Activated B cell treated with CpG ODN at 0.5 μM for 24 hours (primary cell): ENCODE measurements at regions of chr6 and their contacts with region 1.

Region 1: DNA sequence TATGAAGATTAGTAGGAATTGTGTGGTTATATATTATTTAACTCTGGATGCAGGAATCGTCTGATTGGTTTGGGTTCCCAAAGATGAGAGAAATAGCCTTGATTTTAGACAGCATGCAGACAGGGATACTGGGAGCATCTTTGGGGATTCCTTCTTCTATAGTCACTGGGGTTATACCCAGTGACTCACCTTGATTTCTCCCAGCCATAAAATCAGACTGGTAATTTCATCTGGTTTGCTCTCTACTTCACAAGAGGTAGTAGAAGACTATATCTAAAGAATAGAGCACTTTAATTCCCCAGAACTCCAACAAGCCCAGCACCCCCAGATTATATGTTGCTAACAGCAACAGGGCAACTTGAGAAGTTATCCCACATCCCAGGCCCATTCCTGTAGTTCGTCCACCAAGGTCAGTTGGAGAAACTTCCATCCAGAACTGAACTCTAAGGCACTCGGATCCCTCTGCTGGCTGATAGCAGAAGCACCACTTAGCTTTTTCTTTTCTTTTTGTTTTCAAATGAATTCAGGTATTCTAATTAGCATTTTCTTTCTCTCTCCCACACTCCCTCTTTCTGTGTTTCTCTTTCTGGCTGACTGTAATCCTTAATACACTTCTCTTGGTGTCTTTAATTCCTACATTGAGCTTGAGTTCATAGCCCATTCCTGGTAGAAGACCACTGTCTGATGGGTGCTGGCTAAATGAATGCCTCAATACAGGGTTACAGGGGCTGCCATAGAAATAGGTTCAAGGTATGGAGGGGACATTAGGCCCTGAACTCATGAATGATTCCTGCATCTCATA is 20.4 kb upstream of the EFHC1 start:
- DNase-seq: no peak
- ATAC-seq: peak; percentile 61
- H3K4me3 Mint-ChIP-seq: no peak overlapping the region
- H3K27ac Mint-ChIP-seq: no peak overlapping the region
- H3K4me1 Mint-ChIP-seq: peaks cover 33% of the 10 kb centered on the region
- H3K27me3 Mint-ChIP-seq: no peaks in the 10 kb centered on the region
- CTCF ChIP-seq: no peak

Region 2: DNA sequence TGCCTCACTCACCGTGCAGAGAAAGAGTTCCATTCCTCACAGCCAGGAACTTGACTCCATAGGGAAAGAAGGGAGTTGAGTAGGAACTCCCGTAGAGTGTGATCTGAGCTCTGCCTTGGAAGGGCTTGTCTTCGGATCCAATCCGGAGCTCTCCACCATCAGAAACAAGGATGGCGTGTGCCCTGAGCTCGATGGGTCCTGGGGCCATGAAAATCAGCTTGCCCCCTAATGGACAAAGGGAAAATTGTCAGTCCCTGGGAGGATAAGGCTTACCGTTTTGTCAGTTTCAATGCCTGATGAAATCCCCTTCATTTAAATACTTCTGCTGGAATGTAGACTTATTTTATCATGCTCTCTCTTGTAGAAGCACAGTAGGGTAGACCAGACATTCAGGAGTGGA is 465.6 kb before region 1 on chr6:
- CTCF ChIA-PET with region 1: no interaction called
- POLR2A ChIA-PET with region 1: no interaction called
- intact Hi-C with region 1: no loop called
- DNase-seq: no peak
- ATAC-seq: no peak
- H3K4me3 Mint-ChIP-seq: no peak overlapping the region
- H3K27ac Mint-ChIP-seq: no peak overlapping the region
- H3K4me1 Mint-ChIP-seq: no peaks in the 10 kb centered on the region
- H3K27me3 Mint-ChIP-seq: no peaks in the 10 kb centered on the region
- CTCF ChIP-seq: no peak

Region 3: DNA sequence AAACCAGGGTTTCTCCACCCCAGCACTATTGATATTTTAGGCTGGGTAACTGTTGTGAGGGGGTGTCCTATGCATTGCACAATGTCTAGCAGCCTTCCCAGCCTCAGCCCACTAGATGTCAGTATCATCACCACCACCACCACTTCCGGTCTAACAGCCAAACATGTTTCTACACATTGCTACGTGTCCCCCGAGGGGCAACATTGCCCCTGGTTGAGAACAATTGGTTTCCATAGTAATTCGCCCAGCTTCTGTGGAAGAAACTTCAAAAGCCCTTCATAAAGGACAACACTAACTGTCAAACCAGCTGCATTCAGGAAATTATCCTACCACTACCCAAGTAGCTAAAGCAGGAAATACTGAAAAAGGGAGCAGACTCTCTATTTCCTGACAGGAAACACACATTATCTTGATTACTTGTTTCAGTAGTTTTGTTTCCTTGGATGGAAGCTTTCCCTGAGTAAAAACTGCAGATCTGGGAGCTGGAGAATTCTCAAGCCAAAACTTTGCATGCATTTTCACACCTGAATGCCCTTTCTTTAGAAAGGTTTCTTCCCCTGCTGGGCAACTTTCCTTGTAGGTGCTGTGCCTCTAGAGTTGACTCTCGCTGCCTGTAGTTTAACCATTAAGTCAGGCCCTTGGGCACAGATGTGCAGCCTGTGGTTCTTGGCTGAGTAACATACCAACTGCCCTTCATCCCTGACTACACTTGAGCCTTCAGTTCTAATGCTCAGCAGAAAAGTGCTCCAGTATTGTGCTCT is 335.9 kb before region 1 on chr6:
- CTCF ChIA-PET with region 1: no interaction called
- POLR2A ChIA-PET with region 1: no interaction called
- intact Hi-C with region 1: loop called (anchors 10 kb)
- DNase-seq: peak; percentile 18
- ATAC-seq: peak; percentile 99
- H3K4me3 Mint-ChIP-seq: peak overlapping the region; percentile 77
- H3K27ac Mint-ChIP-seq: peak overlapping the region; percentile 25
- H3K4me1 Mint-ChIP-seq: peaks cover 7% of the 10 kb centered on the region
- H3K27me3 Mint-ChIP-seq: no peaks in the 10 kb centered on the region
- CTCF ChIP-seq: no peak

Region 4: GRCh38 chr6:52162940-52163908 is 236.5 kb before region 1 on chr6:
- CTCF ChIA-PET with region 1: no interaction called
- POLR2A ChIA-PET with region 1: no interaction called
- intact Hi-C with region 1: loop called (anchors 1 kb)
- DNase-seq: no peak
- ATAC-seq: peak; percentile 34
- H3K4me3 Mint-ChIP-seq: no peak overlapping the region
- H3K27ac Mint-ChIP-seq: no peak overlapping the region
- H3K4me1 Mint-ChIP-seq: no peaks in the 10 kb centered on the region
- H3K27me3 Mint-ChIP-seq: peaks cover 12% of the 10 kb centered on the region
- CTCF ChIP-seq: no peak

Region 5: DNA sequence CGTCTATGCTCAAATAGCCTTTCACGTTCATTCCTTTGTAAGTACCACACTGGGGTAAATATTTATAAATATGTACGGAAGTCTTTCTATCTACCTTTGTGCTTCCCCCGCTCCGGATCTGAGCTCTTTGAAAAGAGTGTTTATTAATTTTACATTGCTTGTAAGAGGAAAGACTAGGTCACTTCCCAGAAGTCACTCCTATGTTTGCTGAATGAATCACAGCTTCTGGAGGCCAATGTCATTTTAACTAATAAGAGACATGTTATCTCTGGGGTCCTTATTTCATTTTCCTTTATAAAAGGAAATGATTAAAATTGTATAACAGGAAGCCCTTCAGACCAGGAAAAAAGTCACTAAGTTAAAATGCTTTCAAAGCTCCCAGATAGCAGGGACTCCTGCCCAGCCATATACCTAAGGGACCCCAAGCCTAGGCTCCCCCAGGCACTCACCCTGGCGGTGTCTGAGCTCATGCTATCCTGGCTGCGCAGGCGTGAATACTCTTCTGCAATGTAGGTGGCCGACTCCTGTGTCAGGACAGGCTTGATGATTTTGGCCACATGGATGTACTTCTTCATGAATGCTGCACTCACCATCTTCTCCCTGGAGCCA is 127.8 kb before region 1 on chr6:
- CTCF ChIA-PET with region 1: no interaction called
- POLR2A ChIA-PET with region 1: no interaction called
- intact Hi-C with region 1: no loop called
- DNase-seq: no peak
- ATAC-seq: no peak
- H3K4me3 Mint-ChIP-seq: no peak overlapping the region
- H3K27ac Mint-ChIP-seq: no peak overlapping the region
- H3K4me1 Mint-ChIP-seq: no peaks in the 10 kb centered on the region
- H3K27me3 Mint-ChIP-seq: no peaks in the 10 kb centered on the region
- CTCF ChIP-seq: no peak

Region 6: GRCh38 chr6:52491203-52492069 is 91.7 kb after region 1 on chr6:
- CTCF ChIA-PET with region 1: no interaction called
- POLR2A ChIA-PET with region 1: no interaction called
- intact Hi-C with region 1: no loop called
- DNase-seq: no peak
- ATAC-seq: peak; percentile 57
- H3K4me3 Mint-ChIP-seq: peak overlapping the region; percentile 71
- H3K27ac Mint-ChIP-seq: peak overlapping the region; percentile 86
- H3K4me1 Mint-ChIP-seq: peaks cover 68% of the 10 kb centered on the region
- H3K27me3 Mint-ChIP-seq: no peaks in the 10 kb centered on the region
- CTCF ChIP-seq: no peak